Caco-2 (cell line): ENCODE measurements at regions of chr1 and their contacts with region 1.

Region 1: GRCh38 chr1:99945174-99945573 is 24.6 kb upstream of the SLC35A3 start:
- DNase-seq: no peak
- H3K4me3 ChIP-seq: no peak overlapping the region
- H3K4me3 Mint-ChIP-seq: no peak overlapping the region
- H3K27ac Mint-ChIP-seq: no peak overlapping the region
- H3K4me1 ChIP-seq: peaks cover 7% of the 10 kb centered on the region
- H3K4me1 Mint-ChIP-seq: peaks cover 10% of the 10 kb centered on the region
- H3K27me3 ChIP-seq: no peaks in the 10 kb centered on the region
- H3K27me3 Mint-ChIP-seq: no peaks in the 10 kb centered on the region
- CTCF ChIP-seq: no peak

Region 2: DNA sequence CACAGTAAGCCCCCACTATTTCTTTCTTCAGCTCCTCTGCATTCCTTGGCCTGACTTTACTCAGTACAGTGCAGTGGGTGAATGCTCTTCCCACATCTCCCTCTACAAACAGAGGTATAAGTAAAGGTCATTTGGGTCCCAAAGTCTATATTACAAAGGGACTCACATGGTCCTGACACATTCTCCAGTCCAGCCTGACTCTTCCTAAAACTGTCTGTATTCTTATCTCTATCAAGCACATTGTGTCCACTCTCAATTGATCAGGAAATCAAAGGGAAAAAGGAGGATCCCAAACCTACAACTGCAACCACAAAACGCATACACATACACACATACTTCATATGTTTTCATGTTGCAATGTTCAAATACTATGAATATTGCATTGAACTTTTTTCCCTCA is 228.2 kb before region 1 on chr1:
- CTCF ChIA-PET with region 1: no interaction called
- POLR2A ChIA-PET with region 1: no interaction called
- intact Hi-C with region 1: no loop called
- DNase-seq: no peak
- H3K4me3 ChIP-seq: no peak overlapping the region
- H3K4me3 Mint-ChIP-seq: no peak overlapping the region
- H3K27ac Mint-ChIP-seq: no peak overlapping the region
- H3K4me1 ChIP-seq: no peaks in the 10 kb centered on the region
- H3K4me1 Mint-ChIP-seq: no peaks in the 10 kb centered on the region
- H3K27me3 ChIP-seq: no peaks in the 10 kb centered on the region
- H3K27me3 Mint-ChIP-seq: no peaks in the 10 kb centered on the region
- CTCF ChIP-seq: no peak

Region 3: GRCh38 chr1:99886841-99887240 is 58.3 kb before region 1 on chr1:
- CTCF ChIA-PET with region 1: no interaction called
- POLR2A ChIA-PET with region 1: no interaction called
- intact Hi-C with region 1: no loop called
- DNase-seq: no peak
- H3K4me3 ChIP-seq: no peak overlapping the region
- H3K4me3 Mint-ChIP-seq: no peak overlapping the region
- H3K27ac Mint-ChIP-seq: no peak overlapping the region
- H3K4me1 ChIP-seq: peaks cover 8% of the 10 kb centered on the region; the same call in 1 of the 2 replicates
- H3K4me1 Mint-ChIP-seq: no peaks in the 10 kb centered on the region
- H3K27me3 ChIP-seq: no peaks in the 10 kb centered on the region
- H3K27me3 Mint-ChIP-seq: no peaks in the 10 kb centered on the region
- CTCF ChIP-seq: no peak

Region 4: GRCh38 chr1:99969729-99970621 is 24.8 kb after region 1 on chr1 and contains the start of gene SLC35A3:
- CTCF ChIA-PET with region 1: no interaction called
- POLR2A ChIA-PET with region 1: no interaction called
- intact Hi-C with region 1: loop called (anchors 1 kb)
- DNase-seq: peak; percentile 82 to 86
- H3K4me3 ChIP-seq: peak within 1 kb of the TSS; percentile 84
- H3K4me3 Mint-ChIP-seq: peak within 1 kb of the TSS; percentile 86
- H3K27ac Mint-ChIP-seq: peak within 1 kb of the TSS; percentile 87
- H3K4me1 ChIP-seq: peaks cover 6% of the 10 kb centered on the region; the same call in 1 of the 2 replicates
- H3K4me1 Mint-ChIP-seq: no peaks in the 10 kb centered on the region
- H3K27me3 ChIP-seq: no peaks in the 10 kb centered on the region
- H3K27me3 Mint-ChIP-seq: no peaks in the 10 kb centered on the region
- CTCF ChIP-seq: peak in 1 of 2 experiments; percentile 9
- total RNA-seq, gene SLC35A3: 16.9 and 17.4 TPM in 2 replicates